ENCODE measurements at regions of chr11 and their contacts with region 1.

Region 1: DNA sequence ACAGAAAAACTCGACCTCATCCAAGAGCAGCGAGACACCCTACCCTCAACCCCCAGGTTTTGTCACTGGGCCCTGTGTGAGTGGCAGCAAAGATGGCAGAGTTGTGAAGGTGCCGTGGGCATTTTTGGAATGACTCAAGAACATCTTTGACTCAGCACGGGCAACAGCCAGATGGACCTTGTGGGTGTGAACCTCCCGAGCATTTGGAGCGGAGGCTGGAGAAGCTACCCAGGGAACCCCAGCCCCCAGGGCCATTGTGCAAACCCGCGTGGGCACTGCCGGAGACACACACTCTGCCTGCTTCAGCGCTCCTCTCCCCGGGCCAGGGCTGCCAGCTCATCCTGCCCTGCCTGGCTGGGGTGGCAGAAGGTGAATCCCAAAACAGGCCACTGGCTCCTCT is 66.1 kb downstream of the PANX1 start:
- DNase-seq: no peak
- H3K4me3 Mint-ChIP-seq: no peak overlapping the region
- H3K27ac Mint-ChIP-seq: no peak overlapping the region
- H3K4me1 Mint-ChIP-seq: no peaks in the 10 kb centered on the region
- H3K27me3 Mint-ChIP-seq: no peaks in the 10 kb centered on the region

Region 2: GRCh38 chr11:93817426-93818348 is 377.0 kb before region 1 on chr11:
- CTCF ChIA-PET with region 1: no interaction called
- POLR2A ChIA-PET with region 1: no interaction called
- DNase-seq: no peak
- H3K4me3 Mint-ChIP-seq: no peak overlapping the region
- H3K27ac Mint-ChIP-seq: no peak overlapping the region
- H3K4me1 Mint-ChIP-seq: no peaks in the 10 kb centered on the region
- H3K27me3 Mint-ChIP-seq: no peaks in the 10 kb centered on the region

Region 3: DNA sequence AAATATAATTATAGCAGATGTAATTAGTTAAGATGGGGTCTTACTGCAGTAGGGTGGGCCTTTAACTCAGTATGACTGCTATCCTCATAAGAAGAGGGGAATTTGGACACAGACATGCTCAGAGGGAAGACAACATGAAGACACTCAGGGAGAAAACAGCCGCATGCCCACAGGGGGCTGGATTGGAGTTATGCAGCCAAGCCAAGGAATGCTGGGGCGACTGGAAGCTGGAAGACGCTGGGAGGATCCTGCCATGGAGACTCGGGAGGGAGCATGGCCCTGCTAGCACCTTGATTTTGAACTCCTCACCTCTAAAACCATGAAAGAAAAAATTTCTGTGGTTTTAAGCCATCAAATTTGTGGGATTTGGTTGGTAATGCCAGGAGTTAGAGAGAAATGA is 25.2 kb before region 1 on chr11:
- CTCF ChIA-PET with region 1: no interaction called
- POLR2A ChIA-PET with region 1: no interaction called
- DNase-seq: no peak
- H3K4me3 Mint-ChIP-seq: no peak overlapping the region
- H3K27ac Mint-ChIP-seq: no peak overlapping the region
- H3K4me1 Mint-ChIP-seq: peaks cover 5% of the 10 kb centered on the region
- H3K27me3 Mint-ChIP-seq: no peaks in the 10 kb centered on the region

Region 4: GRCh38 chr11:94183886-94184264 is 10.8 kb before region 1 on chr11:
- CTCF ChIA-PET with region 1: interaction called, 12 read pairs
- POLR2A ChIA-PET with region 1: no interaction called
- DNase-seq: peak; percentile 17
- H3K4me3 Mint-ChIP-seq: no peak overlapping the region
- H3K27ac Mint-ChIP-seq: no peak overlapping the region
- H3K4me1 Mint-ChIP-seq: no peaks in the 10 kb centered on the region
- H3K27me3 Mint-ChIP-seq: no peaks in the 10 kb centered on the region

Region 5: GRCh38 chr11:94219771-94220170 is 25.1 kb after region 1 on chr11:
- CTCF ChIA-PET with region 1: no interaction called
- POLR2A ChIA-PET with region 1: no interaction called
- DNase-seq: no peak
- H3K4me3 Mint-ChIP-seq: no peak overlapping the region
- H3K27ac Mint-ChIP-seq: no peak overlapping the region
- H3K4me1 Mint-ChIP-seq: no peaks in the 10 kb centered on the region
- H3K27me3 Mint-ChIP-seq: no peaks in the 10 kb centered on the region

Region 6: GRCh38 chr11:94243571-94244515 is 49.1 kb after region 1 on chr11:
- CTCF ChIA-PET with region 1: no interaction called
- POLR2A ChIA-PET with region 1: no interaction called
- DNase-seq: no peak
- H3K4me3 Mint-ChIP-seq: no peak overlapping the region
- H3K27ac Mint-ChIP-seq: no peak overlapping the region
- H3K4me1 Mint-ChIP-seq: no peaks in the 10 kb centered on the region
- H3K27me3 Mint-ChIP-seq: no peaks in the 10 kb centered on the region